Gastrocnemius medialis (tissue), 4 donors: ENCODE measurements at regions of chr9 and their contacts with region 1.

Region 1: GRCh38 chr9:101514071-101514470 is 19.6 kb upstream of the RNF20 start:
- DNase-seq: no peak
- ATAC-seq: no peak
- H3K4me3 ChIP-seq: no peak overlapping the region
- H3K27ac ChIP-seq: no peak overlapping the region
- H3K4me1 ChIP-seq: no peaks in the 10 kb centered on the region
- H3K27me3 ChIP-seq: no peaks in the 10 kb centered on the region
- CTCF ChIP-seq: no peak
- POLR2A ChIP-seq: no peak

Region 2: GRCh38 chr9:101465392-101465791 is 48.7 kb before region 1 on chr9:
- in situ Hi-C with region 1: loop called in 1 of 4 experiments (anchors 10 kb)
- intact Hi-C with region 1: loop called (anchors 5 kb)
- DNase-seq: no peak
- ATAC-seq: no peak
- H3K4me3 ChIP-seq: no peak overlapping the region
- H3K27ac ChIP-seq: no peak overlapping the region
- H3K4me1 ChIP-seq: no peaks in the 10 kb centered on the region
- H3K27me3 ChIP-seq: peaks cover 0 to 5% (median 0%) of the 10 kb centered on the region in 3 donors
- CTCF ChIP-seq: no peak
- POLR2A ChIP-seq: no peak

Region 3: DNA sequence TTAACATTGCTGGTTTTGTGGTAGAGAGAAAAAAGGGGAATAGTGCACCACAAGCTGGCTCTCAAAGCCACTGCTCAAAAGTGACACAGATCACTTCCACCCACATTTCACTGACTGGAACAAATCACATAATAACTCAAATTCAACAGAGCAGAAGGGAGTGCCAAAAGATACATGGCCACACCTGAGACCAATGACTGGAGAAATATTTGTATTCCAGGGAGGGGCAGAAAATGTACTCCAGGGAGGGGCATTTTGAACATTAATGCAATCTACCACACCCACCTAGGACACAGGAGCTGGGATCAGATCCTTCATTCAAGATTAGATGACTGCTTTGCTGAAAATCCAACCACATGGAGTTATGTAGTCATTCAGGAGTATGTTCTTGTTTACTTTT is 33.7 kb before region 1 on chr9:
- in situ Hi-C with region 1: no loop called
- intact Hi-C with region 1: no loop called
- DNase-seq: no peak
- ATAC-seq: no peak
- H3K4me3 ChIP-seq: no peak overlapping the region
- H3K27ac ChIP-seq: no peak overlapping the region
- H3K4me1 ChIP-seq: peaks cover 1 to 6% of the 10 kb centered on the region in 2 donors
- H3K27me3 ChIP-seq: no peaks in the 10 kb centered on the region
- CTCF ChIP-seq: no peak
- POLR2A ChIP-seq: no peak